CD8-positive, alpha-beta T cell (primary cell): ENCODE measurements at regions of chr16 and their contacts with region 1.

Region 1: DNA sequence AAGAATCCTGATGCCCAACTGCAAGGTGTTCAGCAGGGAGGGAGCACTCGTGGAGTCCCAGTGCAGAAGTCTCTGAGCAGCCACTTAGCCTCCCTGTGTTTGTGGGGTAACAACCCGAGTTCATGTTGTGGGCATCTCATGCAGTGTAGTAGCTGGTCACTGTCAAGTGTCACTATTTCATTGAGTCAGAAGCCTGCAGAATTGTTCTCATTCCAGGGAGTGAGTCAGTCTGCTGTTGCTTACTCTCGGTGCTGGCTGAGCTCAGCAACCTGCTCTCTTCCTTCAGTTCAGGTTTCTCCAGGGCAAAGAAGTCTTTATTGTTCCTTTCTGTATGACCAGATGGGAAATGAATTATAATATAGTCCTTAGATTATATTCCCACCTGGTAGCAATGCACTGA is 24.1 kb downstream of the HMOX2 start:
- DNase-seq: no peak
- ATAC-seq: no peak
- H3K4me3 ChIP-seq: no peak overlapping the region
- H3K4me3 Mint-ChIP-seq: no peak overlapping the region
- H3K27ac ChIP-seq: peak overlapping the region in 1 of 2 experiments; percentile 26
- H3K27ac Mint-ChIP-seq: peak overlapping the region; percentile 98
- H3K4me1 ChIP-seq: peaks cover 91% of the 10 kb centered on the region
- H3K4me1 Mint-ChIP-seq: peaks cover 86% of the 10 kb centered on the region
- H3K27me3 ChIP-seq: no peaks in the 10 kb centered on the region
- H3K27me3 Mint-ChIP-seq: no peaks in the 10 kb centered on the region
- CTCF ChIP-seq: no peak

Region 2: GRCh38 chr16:4373863-4374742 is 126.2 kb before region 1 on chr16:
- CTCF ChIA-PET with region 1: no interaction called
- POLR2A ChIA-PET with region 1: no interaction called
- intact Hi-C with region 1: no loop called
- DNase-seq: peak in 3 of 9 experiments; percentile 49 to 62 (median 61)
- ATAC-seq: no peak
- H3K4me3 ChIP-seq: no peak overlapping the region
- H3K4me3 Mint-ChIP-seq: no peak overlapping the region
- H3K27ac ChIP-seq: no peak overlapping the region
- H3K27ac Mint-ChIP-seq: no peak overlapping the region
- H3K4me1 ChIP-seq: peaks cover 19% of the 10 kb centered on the region
- H3K4me1 Mint-ChIP-seq: peaks cover 25% of the 10 kb centered on the region
- H3K27me3 ChIP-seq: no peaks in the 10 kb centered on the region
- H3K27me3 Mint-ChIP-seq: no peaks in the 10 kb centered on the region
- CTCF ChIP-seq: no peak

Region 3: GRCh38 chr16:4487955-4488498 is 12.2 kb before region 1 on chr16:
- CTCF ChIA-PET with region 1: interaction called, 75 read pairs
- POLR2A ChIA-PET with region 1: interaction called, 52 read pairs
- intact Hi-C with region 1: loop called (anchors 1 kb)
- DNase-seq: peak in 2 of 9 experiments; percentile 29 to 57
- ATAC-seq: peak; percentile 41
- H3K4me3 ChIP-seq: peak overlapping the region in 1 of 2 experiments; percentile 42
- H3K4me3 Mint-ChIP-seq: peak overlapping the region; percentile 70
- H3K27ac ChIP-seq: peak overlapping the region; percentile 79 to 83
- H3K27ac Mint-ChIP-seq: peak overlapping the region; percentile 96
- H3K4me1 ChIP-seq: peaks cover 77% of the 10 kb centered on the region
- H3K4me1 Mint-ChIP-seq: peaks cover 60% of the 10 kb centered on the region
- H3K27me3 ChIP-seq: no peaks in the 10 kb centered on the region
- H3K27me3 Mint-ChIP-seq: no peaks in the 10 kb centered on the region
- CTCF ChIP-seq: no peak